ENCODE measurements at regions of chr10 and their contacts with region 1.

Region 1: DNA sequence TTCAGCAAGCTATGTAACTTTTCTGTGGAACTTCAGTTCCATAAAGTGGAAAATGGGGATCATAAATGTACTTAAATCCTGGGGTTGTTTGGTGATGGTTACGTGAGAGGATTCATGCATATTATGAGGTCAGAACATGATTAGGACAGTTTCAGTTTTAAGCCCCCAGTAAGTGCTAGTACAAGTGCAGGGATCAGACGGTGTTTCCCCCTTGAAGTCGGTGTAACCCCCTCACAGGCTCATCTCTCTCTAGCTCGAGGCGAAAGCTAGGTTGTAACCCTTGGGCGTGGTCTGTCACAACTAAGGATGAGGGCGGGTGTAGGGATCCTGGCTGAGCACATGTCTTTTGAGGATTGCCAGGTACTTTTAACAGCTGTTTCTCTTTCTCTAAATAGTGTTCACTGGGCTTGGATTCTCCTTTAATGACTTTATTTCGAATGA is 84.7 kb downstream of the SPAG6 start:
- DNase-seq: no peak
- H3K4me3 ChIP-seq: no peak overlapping the region
- H3K27ac ChIP-seq: no peak overlapping the region
- H3K27me3 ChIP-seq: no peaks in the 10 kb centered on the region
- CTCF ChIP-seq: no peak

Region 2: GRCh38 chr10:22550732-22551131 is 120.7 kb after region 1 on chr10:
- CTCF ChIA-PET with region 1: interaction called, 11 read pairs
- POLR2A ChIA-PET with region 1: no interaction called
- DNase-seq: no peak
- H3K4me3 ChIP-seq: no peak overlapping the region
- H3K27ac ChIP-seq: no peak overlapping the region
- H3K27me3 ChIP-seq: no peaks in the 10 kb centered on the region
- CTCF ChIP-seq: peak; percentile 53